Left cardiac atrium (tissue), 4 donors: ENCODE measurements at regions of chr7 and their contacts with region 1.

Region 1: DNA sequence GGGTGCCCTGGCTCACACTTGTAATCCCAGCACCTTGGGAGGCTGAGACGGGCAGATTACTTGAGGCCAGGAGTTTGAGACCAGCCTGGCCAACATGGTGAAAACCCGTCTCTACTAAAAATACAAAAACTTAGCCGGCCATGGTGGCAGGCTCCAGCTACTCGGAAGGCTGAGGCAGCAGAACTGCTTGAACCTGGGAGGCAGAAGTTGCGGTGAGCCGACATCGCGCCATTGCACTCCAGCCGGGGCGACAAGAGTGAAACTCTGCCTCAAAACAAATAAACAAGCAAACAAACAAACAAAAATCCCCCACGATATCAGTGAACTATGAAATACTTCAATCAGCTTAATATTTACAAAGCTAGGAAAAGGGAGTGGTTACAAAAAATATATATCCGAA is 382.3 kb upstream of the KCND2 start:
- DNase-seq: no peak
- ATAC-seq: no peak

Region 2: DNA sequence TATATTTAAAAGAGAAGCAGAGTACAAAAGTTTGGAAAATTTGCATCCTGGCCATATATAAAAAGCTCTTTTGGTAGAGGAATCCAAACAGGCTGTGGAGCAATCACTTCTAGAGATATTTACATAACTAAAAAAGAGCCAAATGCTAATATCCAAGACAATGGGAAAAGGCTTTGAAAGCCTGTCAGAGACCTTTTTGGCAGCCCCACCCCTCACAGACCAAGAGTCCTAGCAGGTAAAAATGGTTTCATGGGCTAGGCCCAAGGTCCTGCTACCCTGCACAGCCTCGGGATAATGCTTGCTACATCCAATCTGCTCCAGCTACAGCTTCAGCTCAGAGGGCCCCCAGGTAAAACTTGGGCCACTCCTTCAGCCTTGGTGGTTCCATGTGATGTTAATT is 47.8 kb before region 1 on chr7:
- intact Hi-C with region 1: loop called in 1 of 2 experiments (anchors 10 kb)
- DNase-seq: no peak
- ATAC-seq: no peak

Region 3: DNA sequence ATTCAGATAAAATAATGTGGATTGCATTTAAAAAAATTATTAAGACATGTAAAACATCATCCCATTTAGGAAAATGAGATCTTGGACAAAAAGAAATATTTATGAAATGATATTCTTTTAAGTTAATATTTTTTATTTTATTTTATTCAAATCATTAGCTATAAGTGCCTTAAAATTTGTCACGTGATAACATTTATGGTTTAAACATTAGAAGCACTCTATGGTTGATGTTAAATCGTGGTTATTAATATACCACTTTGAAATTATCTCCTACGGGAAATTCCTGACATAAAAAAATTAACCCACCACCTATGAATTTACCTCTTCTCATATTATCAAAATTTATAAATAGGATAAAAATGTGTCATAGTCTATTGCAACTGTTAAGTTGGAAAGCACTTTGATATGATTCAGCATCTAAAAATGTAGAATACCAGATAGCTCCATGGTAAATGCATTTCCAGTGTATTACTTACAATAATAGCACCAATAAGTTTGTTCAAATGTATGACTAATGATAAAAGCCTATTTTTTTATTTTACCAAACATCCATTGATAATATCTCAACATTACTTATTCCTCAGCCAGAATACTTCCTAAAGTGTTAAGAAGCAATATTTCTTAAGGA is 368.6 kb after region 1 on chr7:
- intact Hi-C with region 1: no loop called
- DNase-seq: no peak
- ATAC-seq: no peak